Activated T-helper 2 cell treated with anti-CD3 and anti-CD28 coated beads, Interferon-gamma antibody, Interleukin-2, Interleukin-4, amounts not matched to agents 10 μg/mL and 5 μg/mL and 100 μg/mL, durations not matched to agents 14 hours and 24 hours and 36 hours (primary cell): ENCODE measurements at regions of chr10 and their contacts with region 1.

Region 1: DNA sequence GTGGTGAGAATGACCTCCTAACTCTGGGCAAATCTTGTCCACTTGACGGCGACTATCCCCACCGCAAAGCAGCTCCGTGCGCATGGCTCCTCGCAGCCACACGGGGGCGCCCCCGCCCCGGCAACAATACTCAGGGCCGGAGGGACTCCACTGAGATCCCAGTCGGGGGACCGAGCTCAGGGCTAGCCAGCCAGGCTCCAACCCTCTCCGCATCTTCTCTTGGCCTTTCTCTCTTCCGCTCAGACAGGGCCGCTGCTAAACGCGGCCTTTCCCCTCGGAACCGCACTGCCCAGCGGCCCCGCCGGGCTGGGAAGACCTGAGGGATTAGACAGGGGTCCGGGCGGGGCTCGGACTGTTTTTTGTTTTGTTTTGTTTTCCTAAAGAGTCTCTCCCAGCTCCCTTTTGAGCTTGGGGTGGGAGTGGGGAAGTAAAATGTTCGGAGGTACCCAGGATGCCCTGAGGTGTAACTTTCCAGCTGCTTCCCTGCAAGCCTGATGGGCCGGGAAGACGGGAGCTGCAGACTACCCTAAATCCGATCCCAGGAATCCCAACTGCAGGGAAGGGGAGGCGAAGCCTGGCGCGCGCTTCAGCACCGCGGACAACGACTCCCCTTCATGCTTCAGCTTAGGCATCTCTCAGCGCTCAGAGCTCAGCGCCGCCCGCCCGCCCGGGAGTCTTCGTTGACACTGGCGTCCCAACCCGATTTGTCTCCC is 2.7 kb downstream of the KCNIP2 start:
- DNase-seq: peak; percentile 70
- H3K4me3 Mint-ChIP-seq: peak overlapping the region; percentile 88
- H3K27ac Mint-ChIP-seq: peak overlapping the region; percentile 77
- H3K4me1 Mint-ChIP-seq: peaks cover 36% of the 10 kb centered on the region
- H3K27me3 Mint-ChIP-seq: peaks cover 23% of the 10 kb centered on the region

Region 2: GRCh38 chr10:101889256-101890210 is 48.6 kb after region 1 on chr10:
- intact Hi-C with region 1: loop called (anchors 2 kb)
- DNase-seq: peak; percentile 53
- H3K4me3 Mint-ChIP-seq: no peak overlapping the region
- H3K27ac Mint-ChIP-seq: no peak overlapping the region
- H3K4me1 Mint-ChIP-seq: peaks cover 3% of the 10 kb centered on the region
- H3K27me3 Mint-ChIP-seq: no peaks in the 10 kb centered on the region

Region 3: DNA sequence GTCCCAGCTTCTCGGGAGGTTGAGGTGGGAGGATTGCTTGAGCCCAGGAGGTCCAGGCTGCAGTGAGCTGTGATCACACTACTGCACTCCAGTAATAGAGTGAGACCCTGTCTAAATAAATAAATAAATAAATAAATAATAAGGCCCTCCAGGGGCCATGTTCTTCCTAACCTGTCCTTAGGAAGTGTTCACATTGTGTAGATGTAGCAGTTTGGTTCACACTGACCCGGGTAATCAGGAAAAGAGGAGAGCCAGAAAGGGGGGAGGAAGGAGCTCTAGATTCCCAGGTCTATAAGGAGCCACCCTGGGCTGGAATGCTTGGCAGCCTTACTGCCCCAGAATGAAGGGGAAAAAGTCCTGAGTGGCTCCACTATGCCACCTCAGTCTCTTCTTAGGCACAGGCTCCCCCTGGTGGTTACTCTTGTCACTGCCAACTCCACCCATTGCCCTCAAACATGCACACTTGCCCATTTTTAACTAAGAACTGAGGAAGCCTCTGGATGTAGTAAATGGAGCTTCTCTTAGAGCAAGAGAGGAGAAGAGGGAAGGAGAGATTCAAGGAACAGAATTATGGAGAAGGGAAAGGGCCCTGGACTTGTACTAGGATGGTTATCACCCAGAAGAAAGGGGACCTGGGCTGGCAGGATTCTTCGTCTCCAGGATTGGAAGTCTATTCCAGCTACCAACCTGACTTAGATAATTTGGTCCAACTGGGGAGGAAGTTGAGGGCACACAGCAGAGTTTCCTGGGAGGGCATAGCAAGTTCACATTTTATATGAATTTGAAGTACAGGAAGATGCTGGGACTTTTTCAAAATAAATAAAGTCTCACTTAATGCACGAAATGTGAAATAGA is 232.0 kb after region 1 on chr10:
- intact Hi-C with region 1: loop called (anchors 1 kb)
- DNase-seq: peak; percentile 67
- H3K4me3 Mint-ChIP-seq: no peak overlapping the region
- H3K27ac Mint-ChIP-seq: no peak overlapping the region
- H3K4me1 Mint-ChIP-seq: no peaks in the 10 kb centered on the region
- H3K27me3 Mint-ChIP-seq: no peaks in the 10 kb centered on the region